MCF 10A (cell line): ENCODE measurements at regions of chr12 and their contacts with region 1.

Region 1: DNA sequence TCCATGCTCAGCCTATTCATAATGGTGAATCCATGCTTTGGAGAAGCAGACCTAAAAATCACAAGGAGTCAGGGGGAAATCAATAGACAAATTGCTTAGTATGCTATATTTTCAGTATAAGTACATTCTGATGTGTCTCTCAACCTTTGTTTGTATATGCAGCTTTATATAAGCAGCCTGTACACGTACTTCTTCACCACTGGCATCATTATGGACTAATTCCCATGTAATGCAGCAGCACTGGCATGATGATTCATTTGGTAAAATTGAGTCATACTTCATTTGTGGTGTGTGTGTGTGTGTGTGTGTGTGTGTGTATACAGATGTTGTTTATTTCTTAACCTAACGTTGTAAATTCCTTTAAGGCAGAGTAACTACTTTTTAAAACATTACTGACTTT is 10.9 kb downstream of the DCP1B start:
- DNase-seq: peak; percentile 83
- H3K4me3 Mint-ChIP-seq: no peak overlapping the region
- H3K27ac Mint-ChIP-seq: no peak overlapping the region
- H3K4me1 Mint-ChIP-seq: peaks cover 10% of the 10 kb centered on the region
- H3K27me3 Mint-ChIP-seq: no peaks in the 10 kb centered on the region
- CTCF ChIP-seq: no peak

Region 2: DNA sequence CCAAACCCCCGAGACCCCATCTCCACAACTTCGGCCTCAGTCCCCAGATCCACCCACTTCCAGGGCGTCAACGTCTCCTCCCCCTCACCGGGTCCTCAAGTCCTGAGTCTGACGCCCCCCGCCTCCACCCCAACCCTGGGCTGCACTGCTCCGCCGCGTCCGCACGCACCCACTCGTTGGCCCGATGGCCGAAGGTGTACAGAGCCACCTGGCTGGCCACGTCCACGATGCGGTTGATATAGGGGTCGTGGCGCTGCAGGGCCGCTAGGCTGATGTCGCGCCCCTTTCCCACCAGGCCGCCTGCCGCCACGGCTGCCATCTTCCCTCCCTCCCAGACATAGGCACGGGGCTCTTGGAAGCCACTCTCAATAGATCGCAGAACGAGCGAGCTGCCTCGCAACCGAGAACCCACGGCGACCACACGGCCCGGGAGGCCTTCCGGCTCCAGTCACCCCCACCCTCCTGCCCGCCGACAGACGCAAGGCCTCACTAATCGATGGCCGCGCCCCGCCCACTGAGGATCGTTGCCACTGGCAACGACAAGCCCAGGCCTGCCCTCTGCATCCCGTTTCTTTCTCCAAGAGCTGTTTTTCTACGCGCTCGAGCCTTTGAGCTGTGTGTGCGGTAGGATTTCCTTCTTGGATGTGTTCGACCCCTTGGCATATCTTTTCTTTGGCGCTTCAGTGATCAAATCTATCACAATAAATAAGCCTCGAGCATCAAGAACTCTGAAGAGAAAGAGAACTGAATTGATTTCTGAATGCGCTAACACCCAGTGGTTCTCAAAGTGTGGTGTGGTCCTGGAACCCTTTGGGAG is 11.0 kb after region 1 on chr12 and contains the start of gene DCP1B:
- CTCF ChIA-PET with region 1: no interaction called
- POLR2A ChIA-PET with region 1: interaction called, 23 read pairs
- intact Hi-C with region 1: no loop called
- DNase-seq: peak; percentile 83
- H3K4me3 Mint-ChIP-seq: peak within 1 kb of the TSS; percentile 89
- H3K27ac Mint-ChIP-seq: peak within 1 kb of the TSS; percentile 89
- H3K4me1 Mint-ChIP-seq: peaks cover 6% of the 10 kb centered on the region
- H3K27me3 Mint-ChIP-seq: peaks cover 29% of the 10 kb centered on the region
- CTCF ChIP-seq: no peak
- total RNA-seq, gene DCP1B: 5.5 and 6.0 TPM in 2 replicates